HepG2 (cell line): ENCODE measurements at regions of chr19 and their contacts with region 1.

Region 1: GRCh38 chr19:39390755-39391592 is at the starts of genes MED29 and PAF1:
- DNase-seq: peak; percentile 99
- ATAC-seq: peak; percentile 96
- H3K4me3 ChIP-seq: peak within 1 kb of the TSS; percentile 92 to 96 (median 95)
- H3K27ac ChIP-seq: peak within 1 kb of the TSS; percentile 86
- H3K4me1 ChIP-seq: peaks cover 22% of the 10 kb centered on the region
- H3K27me3 ChIP-seq: no peaks in the 10 kb centered on the region
- CTCF ChIP-seq: peak; percentile 57
- EP300 ChIP-seq: no peak
- POLR2A ChIP-seq: peak; percentile 98
- RAD21 ChIP-seq: 0 out of 2 replicates have a peak, but pooled peaks have one; percentile 16
- total RNA-seq, gene MED29: 14.0 and 18.1 TPM in 2 replicates
- total RNA-seq, gene PAF1: 30.2 and 31.0 TPM in 2 replicates

Region 2: DNA sequence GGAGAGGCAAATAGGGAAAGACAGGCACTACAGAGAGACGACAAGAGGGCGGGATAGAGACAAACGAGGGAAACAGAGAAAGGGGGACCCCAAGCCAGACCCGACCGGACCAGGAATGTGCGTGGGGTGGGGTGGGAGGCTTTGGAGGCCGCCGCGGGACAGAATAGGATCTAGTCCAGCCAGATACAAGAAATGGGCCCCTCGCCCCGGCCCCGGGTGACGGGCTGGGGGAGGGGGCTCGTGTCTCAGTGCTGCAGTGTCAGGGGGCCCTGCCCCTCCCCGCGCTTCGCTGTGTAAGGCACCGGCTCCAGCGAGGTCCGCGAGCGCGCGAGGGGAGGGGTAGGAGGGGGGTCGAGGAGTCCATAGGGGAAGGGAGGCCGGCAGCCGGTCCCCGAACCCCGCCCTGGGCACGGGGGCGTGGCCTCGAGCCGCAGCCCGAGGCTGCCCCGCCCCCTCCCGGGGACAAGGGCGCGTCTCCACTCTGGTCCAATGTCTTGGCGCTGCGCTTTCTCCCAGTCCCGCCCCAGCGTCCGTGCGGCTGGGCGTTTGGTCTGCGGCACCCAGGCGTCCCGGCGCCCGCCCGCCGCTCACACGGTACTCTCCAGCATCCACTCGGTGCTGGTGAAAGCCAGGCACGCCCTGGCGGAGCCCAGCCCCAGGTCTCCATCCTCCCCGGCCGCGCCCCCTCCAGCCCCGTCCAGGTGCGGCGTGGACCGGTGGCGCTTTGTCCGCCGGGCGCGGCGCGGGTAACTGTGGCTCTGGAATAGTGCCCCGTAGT is 83.7 kb before region 1 on chr19:
- CTCF ChIA-PET with region 1: no interaction called
- POLR2A ChIA-PET with region 1: no interaction called
- in situ Hi-C with region 1: no loop called
- intact Hi-C with region 1: no loop called
- DNase-seq: no peak
- ATAC-seq: peak; percentile 25; the same call in 1 of the 3 replicates
- H3K4me3 ChIP-seq: peak overlapping the region in 2 of 3 experiments; percentile 3 to 43; a peak in 2 of 6 replicates
- H3K27ac ChIP-seq: no peak overlapping the region
- H3K4me1 ChIP-seq: peaks cover 29% of the 10 kb centered on the region
- H3K27me3 ChIP-seq: peaks cover 0 to 4% of the 10 kb centered on the region in 2 experiments; a peak in 2 of 5 replicates
- CTCF ChIP-seq: no peak
- EP300 ChIP-seq: no peak
- POLR2A ChIP-seq: no peak
- RAD21 ChIP-seq: no peak

Region 3: DNA sequence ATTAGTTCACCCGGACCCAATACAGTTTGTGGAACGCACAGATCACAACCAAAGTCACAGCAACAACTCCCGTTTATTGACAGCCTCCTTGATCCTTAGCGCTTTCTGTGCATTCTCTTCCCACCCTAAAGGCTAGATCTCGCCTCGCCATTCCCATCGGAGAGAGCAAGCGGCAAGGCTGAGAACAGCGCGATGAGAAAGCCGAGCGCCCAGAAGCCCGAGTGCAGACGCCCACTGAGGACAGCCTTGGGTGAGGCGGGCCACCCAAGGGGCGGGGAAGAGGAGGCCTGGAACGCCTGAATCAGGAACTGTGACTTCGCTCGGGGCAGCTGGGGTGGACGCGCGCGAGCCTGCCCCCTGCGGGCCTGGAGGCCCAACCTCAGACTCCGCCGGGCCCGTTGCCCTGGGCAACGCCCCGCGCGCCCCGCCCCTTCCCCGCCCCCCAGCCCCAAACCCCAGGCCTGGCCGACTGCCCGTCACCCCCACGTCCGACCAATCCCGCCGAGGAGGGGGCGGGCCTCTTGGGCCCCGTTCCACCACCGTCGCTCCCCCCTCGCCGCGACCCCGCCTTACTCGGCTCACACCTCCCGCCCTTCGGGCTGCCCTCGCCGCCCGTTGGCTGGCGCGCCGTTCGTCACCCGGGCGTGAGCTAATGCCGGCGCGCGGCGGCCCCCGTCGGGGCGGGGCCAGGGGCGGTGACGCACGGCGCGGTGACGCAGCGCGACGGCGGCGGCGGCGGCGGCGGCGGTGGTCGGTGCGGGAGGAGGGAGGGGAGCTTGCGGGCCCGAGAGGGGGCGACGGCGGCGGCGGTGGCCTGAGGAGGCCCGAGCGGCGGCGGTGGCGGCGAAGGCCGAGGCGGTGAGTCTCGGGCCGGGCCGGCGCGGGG is 49.0 kb before region 1 on chr19 and contains the start of gene SAMD4B:
- CTCF ChIA-PET with region 1: no interaction called
- POLR2A ChIA-PET with region 1: interaction called, 14 read pairs
- in situ Hi-C with region 1: no loop called
- intact Hi-C with region 1: no loop called
- DNase-seq: peak; percentile 92
- ATAC-seq: peak; percentile 94
- H3K4me3 ChIP-seq: peak within 1 kb of the TSS; percentile 84 to 94 (median 88)
- H3K27ac ChIP-seq: peak within 1 kb of the TSS; percentile 74
- H3K4me1 ChIP-seq: peaks cover 69% of the 10 kb centered on the region
- H3K27me3 ChIP-seq: no peaks in the 10 kb centered on the region; a peak in 1 of 5 replicates
- CTCF ChIP-seq: peak; percentile 86
- EP300 ChIP-seq: 0 out of 4 replicates have a peak, but pooled peaks of 1 of the 2 experiments have one; percentile 20
- POLR2A ChIP-seq: peak; percentile 90 to 96
- RAD21 ChIP-seq: peak; percentile 49
- total RNA-seq, gene SAMD4B: 26.0 and 29.1 TPM in 2 replicates

Region 4: GRCh38 chr19:39403331-39404312 is 12.6 kb after region 1 on chr19:
- CTCF ChIA-PET with region 1: no interaction called
- POLR2A ChIA-PET with region 1: interaction called, 48 read pairs
- in situ Hi-C with region 1: no loop called
- intact Hi-C with region 1: loop called (anchors 1 kb)
- DNase-seq: no peak
- ATAC-seq: no peak
- H3K4me3 ChIP-seq: no peak overlapping the region
- H3K27ac ChIP-seq: peak overlapping the region; percentile 98
- H3K4me1 ChIP-seq: peaks cover 68% of the 10 kb centered on the region
- H3K27me3 ChIP-seq: no peaks in the 10 kb centered on the region; a peak in 1 of 5 replicates
- CTCF ChIP-seq: no peak
- EP300 ChIP-seq: no peak
- POLR2A ChIP-seq: no peak
- RAD21 ChIP-seq: no peak